H1 (cell line): ENCODE measurements at regions of chr21 and their contacts with region 1.

Region 1: DNA sequence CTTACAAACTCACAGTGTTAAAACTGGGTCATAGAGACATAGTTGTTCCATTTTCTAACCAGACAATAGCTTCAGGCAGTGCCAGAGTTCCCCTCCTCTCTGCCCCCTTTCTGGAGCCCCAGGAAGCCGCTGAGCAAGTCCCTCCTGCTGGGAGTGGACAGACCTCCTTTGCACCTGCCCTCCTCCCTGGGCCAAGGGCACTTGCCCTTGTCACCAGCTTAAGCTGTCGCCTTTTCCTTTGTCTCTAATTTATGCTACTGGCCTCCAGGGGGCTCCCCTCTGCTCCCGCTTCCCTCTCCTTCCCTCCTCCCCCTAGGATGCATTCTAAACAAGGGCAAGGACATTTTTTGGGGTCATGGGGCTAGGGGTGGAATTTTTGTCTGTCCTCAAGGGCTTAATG is 182.4 kb downstream of the MIS18A start:
- DNase-seq: peak; percentile 34 to 70
- H3K4me3 ChIP-seq: no peak overlapping the region
- H3K27ac ChIP-seq: no peak overlapping the region
- H3K4me1 ChIP-seq: peaks cover 0 to 5% (median 2%) of the 10 kb centered on the region in 4 experiments; a peak in 6 of 7 replicates
- H3K27me3 ChIP-seq: peaks cover 0 to 3% (median 0%) of the 10 kb centered on the region in 4 experiments; a peak in 1 of 7 replicates
- CTCF ChIP-seq: peak; percentile 60 to 72 (median 71)
- EP300 ChIP-seq: no peak
- POLR2A ChIP-seq: no peak
- RAD21 ChIP-seq: peak; percentile 56 to 66

Region 2: GRCh38 chr21:31964692-31965091 is 131.7 kb before region 1 on chr21:
- CTCF ChIA-PET with region 1: no interaction called
- POLR2A ChIA-PET with region 1: no interaction called
- DNase-seq: no peak
- H3K4me3 ChIP-seq: no peak overlapping the region
- H3K27ac ChIP-seq: no peak overlapping the region
- H3K4me1 ChIP-seq: no peaks in the 10 kb centered on the region
- H3K27me3 ChIP-seq: no peaks in the 10 kb centered on the region
- CTCF ChIP-seq: no peak
- EP300 ChIP-seq: no peak
- POLR2A ChIP-seq: no peak
- RAD21 ChIP-seq: no peak

Region 3: DNA sequence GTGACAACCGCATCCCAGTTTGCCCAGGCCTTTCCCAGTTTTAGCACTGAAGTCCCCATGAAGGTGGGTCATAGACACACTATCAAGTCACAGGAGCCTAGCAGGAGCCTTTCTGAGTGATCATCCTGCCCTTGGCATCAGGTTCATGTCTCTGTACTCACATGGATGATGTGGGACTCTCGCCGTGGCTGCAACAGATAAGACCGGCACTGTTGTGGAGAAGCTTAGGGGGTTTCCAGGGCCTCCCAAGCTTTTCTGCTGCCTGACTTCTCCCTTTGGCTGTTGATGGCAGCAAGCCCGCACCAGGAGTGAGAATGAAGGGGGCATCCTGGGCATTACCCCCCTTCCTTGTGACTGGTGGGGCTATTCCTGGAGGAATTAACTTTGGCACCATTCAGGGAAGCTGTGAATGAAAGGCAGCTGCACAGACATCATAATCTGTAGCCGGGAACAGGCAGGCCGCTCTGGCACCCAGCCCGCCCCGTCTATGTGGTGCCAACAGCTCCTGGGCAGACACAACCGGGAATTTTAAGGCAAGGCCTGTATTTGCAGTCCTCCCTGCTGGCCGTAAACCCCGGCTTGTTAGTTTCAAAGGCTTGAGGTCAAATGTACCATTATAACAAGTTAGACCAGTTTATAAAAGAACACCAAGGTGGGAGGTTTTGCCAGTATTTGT is 75.0 kb before region 1 on chr21:
- CTCF ChIA-PET with region 1: no interaction called
- POLR2A ChIA-PET with region 1: no interaction called
- DNase-seq: no peak
- H3K4me3 ChIP-seq: no peak overlapping the region
- H3K27ac ChIP-seq: no peak overlapping the region
- H3K4me1 ChIP-seq: no peaks in the 10 kb centered on the region
- H3K27me3 ChIP-seq: no peaks in the 10 kb centered on the region
- CTCF ChIP-seq: no peak
- EP300 ChIP-seq: no peak
- POLR2A ChIP-seq: no peak
- RAD21 ChIP-seq: no peak

Region 4: DNA sequence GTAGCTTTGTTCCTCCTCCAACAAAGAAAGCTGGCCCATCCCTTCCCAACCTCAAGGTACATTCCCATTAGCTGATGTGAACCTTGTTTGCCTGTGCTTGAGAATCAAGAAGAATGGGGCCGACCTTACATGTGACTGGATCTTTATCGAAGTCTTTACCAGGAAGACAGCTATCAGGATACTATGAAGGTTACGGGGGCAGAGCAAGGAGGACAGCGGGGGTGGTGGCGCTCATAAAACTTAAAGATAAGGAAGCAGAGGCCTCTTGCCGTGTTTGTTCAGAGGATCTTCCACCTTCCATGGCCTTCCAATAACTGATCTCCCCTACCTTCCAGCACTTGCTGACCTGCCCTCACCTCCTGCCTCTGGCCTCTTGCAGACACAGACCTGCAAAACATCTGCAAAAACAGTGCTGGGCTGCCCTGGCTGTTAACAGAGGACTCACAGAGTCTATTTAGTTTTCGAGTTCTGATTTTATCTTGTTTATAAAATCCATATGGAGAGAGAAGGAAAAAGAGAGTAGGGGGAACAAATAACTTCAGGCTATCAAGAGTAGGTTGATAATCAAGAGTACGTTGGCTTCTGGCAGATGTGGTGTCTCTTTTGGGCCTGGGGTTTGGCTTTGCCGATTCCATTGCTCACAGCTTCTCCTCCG is 25.6 kb before region 1 on chr21:
- CTCF ChIA-PET with region 1: interaction called, 21 read pairs
- POLR2A ChIA-PET with region 1: no interaction called
- DNase-seq: no peak
- H3K4me3 ChIP-seq: no peak overlapping the region
- H3K27ac ChIP-seq: no peak overlapping the region
- H3K4me1 ChIP-seq: no peaks in the 10 kb centered on the region; a peak in 1 of 7 replicates
- H3K27me3 ChIP-seq: no peaks in the 10 kb centered on the region
- CTCF ChIP-seq: no peak
- EP300 ChIP-seq: no peak
- POLR2A ChIP-seq: no peak
- RAD21 ChIP-seq: no peak

Region 5: GRCh38 chr21:32083197-32083596 is 13.2 kb before region 1 on chr21:
- CTCF ChIA-PET with region 1: interaction called, 24 read pairs
- POLR2A ChIA-PET with region 1: no interaction called
- DNase-seq: no peak
- H3K4me3 ChIP-seq: no peak overlapping the region
- H3K27ac ChIP-seq: no peak overlapping the region
- H3K4me1 ChIP-seq: no peaks in the 10 kb centered on the region
- H3K27me3 ChIP-seq: peaks cover 0 to 2% (median 0%) of the 10 kb centered on the region in 4 experiments; a peak in 1 of 7 replicates
- CTCF ChIP-seq: no peak
- EP300 ChIP-seq: no peak
- POLR2A ChIP-seq: no peak
- RAD21 ChIP-seq: no peak

Region 6: DNA sequence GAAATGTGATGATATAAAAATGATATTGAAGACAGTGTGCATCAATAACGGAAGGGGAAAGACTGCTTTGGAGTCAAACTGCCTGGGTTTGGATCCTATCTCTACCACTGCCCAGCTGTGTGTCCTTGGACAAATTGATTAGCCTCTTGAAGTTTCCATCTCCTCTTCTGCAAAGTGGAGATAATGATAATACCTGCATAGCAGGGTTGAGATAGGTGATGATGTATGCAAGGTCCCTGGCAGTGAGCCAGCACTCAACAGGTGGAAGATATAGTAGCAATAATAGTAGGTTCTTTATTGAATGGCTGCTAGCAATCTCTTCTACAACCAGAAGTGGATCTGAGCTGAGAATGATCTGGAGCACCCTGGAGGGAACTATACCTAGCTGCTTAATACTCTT is 15.8 kb after region 1 on chr21:
- CTCF ChIA-PET with region 1: interaction called, 25 read pairs
- POLR2A ChIA-PET with region 1: no interaction called
- DNase-seq: no peak
- H3K4me3 ChIP-seq: no peak overlapping the region
- H3K27ac ChIP-seq: no peak overlapping the region
- H3K4me1 ChIP-seq: no peaks in the 10 kb centered on the region
- H3K27me3 ChIP-seq: no peaks in the 10 kb centered on the region; a peak in 1 of 7 replicates
- CTCF ChIP-seq: no peak
- EP300 ChIP-seq: no peak
- POLR2A ChIP-seq: no peak
- RAD21 ChIP-seq: no peak